ENCODE measurements at regions of chr22 and their contacts with region 1.

Region 1: GRCh38 chr22:36470162-36470993 is 11.1 kb downstream of the TXN2 start:
- DNase-seq: peak; percentile 86
- ATAC-seq: peak; percentile 95
- H3K4me3 Mint-ChIP-seq: no peak overlapping the region
- H3K27ac Mint-ChIP-seq: peak overlapping the region; percentile 87
- H3K4me1 Mint-ChIP-seq: 0 out of 2 replicates have a peak, but pooled peaks cover 3% of the 10 kb centered on the region
- H3K27me3 Mint-ChIP-seq: no peaks in the 10 kb centered on the region
- CTCF ChIP-seq: peak; percentile 93

Region 2: DNA sequence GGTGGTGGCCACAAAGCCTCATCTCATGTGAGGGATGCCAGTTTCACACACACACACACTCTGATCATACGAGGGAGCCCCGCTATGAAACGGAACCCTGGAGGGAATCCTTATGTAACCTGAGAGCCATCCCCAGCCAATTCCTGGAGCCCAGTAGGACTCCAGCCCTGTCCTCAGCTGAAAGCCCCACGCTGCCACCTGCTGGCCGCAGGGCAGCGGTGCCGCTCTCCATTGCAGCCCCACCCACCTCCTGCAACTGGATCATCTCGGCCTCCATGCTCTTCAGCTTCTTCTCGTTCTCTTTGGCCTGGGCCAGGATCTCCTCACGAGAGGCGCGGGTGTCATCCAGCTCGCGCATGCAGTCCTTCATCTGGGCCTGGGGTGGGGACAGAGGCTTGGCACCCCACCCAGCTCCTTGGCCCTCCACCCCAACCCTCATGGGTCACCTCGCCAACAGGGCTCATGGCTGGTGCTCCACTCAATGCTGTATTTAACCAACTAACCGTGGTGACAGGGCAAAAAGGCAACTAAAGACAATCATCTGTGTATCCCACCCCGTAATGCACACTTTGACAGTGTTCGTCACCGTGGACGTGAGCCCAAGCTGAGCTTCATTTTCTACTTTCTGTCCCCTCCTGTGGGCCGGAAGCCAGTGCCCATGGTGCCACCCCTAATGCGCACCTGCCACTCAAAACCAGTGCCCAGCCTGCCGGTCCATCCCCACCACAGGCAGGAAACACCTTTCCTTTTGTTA is 183.7 kb before region 1 on chr22:
- CTCF ChIA-PET with region 1: interaction called, 10 read pairs
- POLR2A ChIA-PET with region 1: no interaction called
- DNase-seq: peak; percentile 87
- ATAC-seq: peak; percentile 94
- H3K4me3 Mint-ChIP-seq: no peak overlapping the region
- H3K27ac Mint-ChIP-seq: 0 out of 2 replicates have a peak overlapping the region, but pooled peaks have one; percentile 15
- H3K4me1 Mint-ChIP-seq: peaks cover 5% of the 10 kb centered on the region; the same call in 1 of the 2 replicates
- H3K27me3 Mint-ChIP-seq: no peaks in the 10 kb centered on the region
- CTCF ChIP-seq: peak; percentile 85

Region 3: GRCh38 chr22:36359181-36359996 is 111.0 kb before region 1 on chr22:
- CTCF ChIA-PET with region 1: interaction called, 13 read pairs
- POLR2A ChIA-PET with region 1: no interaction called
- DNase-seq: no peak
- ATAC-seq: no peak
- H3K4me3 Mint-ChIP-seq: no peak overlapping the region
- H3K27ac Mint-ChIP-seq: peak overlapping the region; percentile 85
- H3K4me1 Mint-ChIP-seq: peaks cover 88% of the 10 kb centered on the region
- H3K27me3 Mint-ChIP-seq: no peaks in the 10 kb centered on the region
- CTCF ChIP-seq: no peak

Region 4: DNA sequence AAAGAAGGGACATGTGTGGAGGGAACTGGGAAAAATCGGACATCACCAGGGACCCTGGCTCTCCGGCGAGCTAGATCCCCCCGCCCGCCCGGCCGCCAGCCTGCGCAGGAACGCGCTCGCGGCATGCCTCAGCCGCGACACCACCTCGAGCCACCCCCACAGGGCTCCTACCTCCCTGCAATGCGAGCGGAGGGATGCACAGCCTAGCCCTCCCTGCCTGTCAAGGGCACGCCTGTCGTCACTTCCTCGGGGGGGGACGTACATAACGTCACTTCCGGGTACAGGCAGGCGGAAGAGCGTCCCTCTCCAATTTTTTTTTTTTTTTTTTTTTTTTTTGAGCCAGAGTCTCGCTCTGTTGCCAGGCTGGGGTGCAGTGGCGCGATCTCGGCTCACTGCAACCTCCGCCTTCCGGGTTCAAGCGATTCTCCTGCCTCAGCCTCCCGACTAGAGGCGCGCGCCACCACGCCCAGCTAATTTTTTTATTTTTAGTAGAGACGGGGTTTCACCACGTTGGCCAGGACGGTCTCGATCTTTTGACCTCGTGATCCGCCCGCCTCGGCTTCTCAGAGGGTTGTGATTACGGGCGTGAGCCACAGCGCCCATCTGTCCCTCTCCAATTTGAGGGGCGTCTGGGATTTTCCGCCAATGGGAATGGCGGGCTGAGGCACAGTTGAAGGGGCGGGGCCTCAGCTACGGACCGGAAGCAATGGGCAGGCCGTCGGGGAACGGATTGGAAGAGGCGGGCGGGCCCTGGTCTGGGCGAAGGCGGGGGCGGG is 11.2 kb after region 1 on chr22 and contains the start of gene TXN2:
- CTCF ChIA-PET with region 1: interaction called, 38 read pairs
- POLR2A ChIA-PET with region 1: no interaction called
- DNase-seq: peak; percentile 94
- ATAC-seq: peak; percentile 93
- H3K4me3 Mint-ChIP-seq: peak within 1 kb of the TSS; percentile 88
- H3K27ac Mint-ChIP-seq: peak within 1 kb of the TSS; percentile 94
- H3K4me1 Mint-ChIP-seq: peaks cover 9% of the 10 kb centered on the region
- H3K27me3 Mint-ChIP-seq: peaks cover 36% of the 10 kb centered on the region
- CTCF ChIP-seq: no peak
- total RNA-seq, gene TXN2: 57.6 to 61.6 TPM (median 58.8 TPM) in 3 replicates